Posterior cingulate gyrus (tissue), 11 donors: ENCODE measurements at regions of chr4 and their contacts with region 1.

Region 1: DNA sequence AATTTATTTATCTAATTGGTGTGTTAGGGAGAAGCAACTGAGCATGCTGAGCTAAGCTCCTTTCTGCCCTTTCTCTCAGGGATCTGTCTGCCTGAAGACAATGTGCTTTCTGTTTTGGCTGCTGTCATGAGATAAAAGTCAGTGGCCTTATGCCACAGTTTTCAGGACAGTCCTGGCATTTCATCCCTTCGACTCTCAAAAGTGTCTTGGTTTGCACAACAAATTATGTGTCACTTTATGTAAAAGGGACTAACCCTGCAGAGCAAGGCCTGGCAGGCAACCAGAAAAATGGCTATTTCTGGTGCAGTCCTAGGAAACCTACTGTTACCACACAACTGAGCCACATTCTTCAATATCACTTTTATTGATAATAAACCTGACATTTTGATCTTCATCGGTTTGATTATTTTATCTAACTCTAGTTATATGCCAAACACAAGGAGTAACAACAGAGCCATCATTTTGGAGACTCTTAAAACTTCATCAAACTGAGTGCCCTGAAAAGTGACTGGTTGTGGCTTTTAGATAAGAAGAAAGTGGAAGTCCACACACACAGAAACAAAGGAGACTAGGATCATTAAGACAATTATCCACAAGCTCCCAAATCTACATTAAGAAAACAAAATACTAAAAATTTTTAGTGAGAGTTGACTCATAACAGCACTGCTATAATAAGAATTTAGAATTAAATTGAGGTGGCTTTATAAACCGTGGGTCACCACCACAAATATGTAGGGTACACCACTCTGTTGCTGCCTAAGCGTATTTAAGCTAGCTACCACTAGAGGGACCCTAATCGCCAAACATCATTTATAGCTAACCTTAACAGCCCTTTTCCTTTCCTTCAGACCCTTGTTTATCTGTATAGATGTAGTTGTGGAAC is 95.9 kb upstream of the PTPN13 start:
- DNase-seq: peak in 2 of 10 donors; percentile 25 to 28

Region 2: GRCh38 chr4:85873566-85873965 is 624.7 kb before region 1 on chr4:
- intact Hi-C with region 1: no loop called
- DNase-seq: no peak

Region 3: DNA sequence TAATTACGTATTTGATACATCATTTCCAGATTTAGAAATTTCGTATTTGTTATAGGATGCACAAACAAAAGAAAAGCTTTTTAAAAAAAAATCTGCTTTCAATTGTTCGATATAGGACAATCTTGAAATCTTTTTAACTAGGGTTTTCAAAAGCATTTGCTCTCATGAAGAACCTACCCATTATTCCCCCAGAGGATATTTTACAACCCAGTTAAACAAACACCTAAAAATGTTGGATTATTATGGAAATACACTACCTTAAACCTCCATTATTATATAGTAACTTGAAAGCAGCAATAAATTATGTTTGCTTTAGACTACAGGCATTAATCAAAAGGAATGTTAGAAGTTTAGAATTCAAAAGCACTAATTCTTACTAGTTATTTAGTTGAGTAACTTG is 206.4 kb after region 1 on chr4:
- intact Hi-C with region 1: no loop called
- DNase-seq: no peak

Region 4: GRCh38 chr4:86895692-86896488 is 397.7 kb after region 1 on chr4:
- intact Hi-C with region 1: loop called (anchors 1 kb)
- DNase-seq: no peak

Region 5: GRCh38 chr4:87093443-87094123 is 595.4 kb after region 1 on chr4:
- intact Hi-C with region 1: loop called (anchors 5 kb)
- DNase-seq: peak in 3 of 10 donors; percentile 41 to 48 (median 42)